HEK293 (cell line): ENCODE measurements at regions of chr20 and their contacts with region 1.

Region 1: GRCh38 chr20:37384683-37385174 is 38.8 kb downstream of the SRC start:
- H3K4me3 ChIP-seq: no peak overlapping the region
- H3K27ac ChIP-seq: no peak overlapping the region
- H3K4me1 ChIP-seq: no peaks in the 10 kb centered on the region
- CTCF ChIP-seq: peak; percentile 90

Region 2: DNA sequence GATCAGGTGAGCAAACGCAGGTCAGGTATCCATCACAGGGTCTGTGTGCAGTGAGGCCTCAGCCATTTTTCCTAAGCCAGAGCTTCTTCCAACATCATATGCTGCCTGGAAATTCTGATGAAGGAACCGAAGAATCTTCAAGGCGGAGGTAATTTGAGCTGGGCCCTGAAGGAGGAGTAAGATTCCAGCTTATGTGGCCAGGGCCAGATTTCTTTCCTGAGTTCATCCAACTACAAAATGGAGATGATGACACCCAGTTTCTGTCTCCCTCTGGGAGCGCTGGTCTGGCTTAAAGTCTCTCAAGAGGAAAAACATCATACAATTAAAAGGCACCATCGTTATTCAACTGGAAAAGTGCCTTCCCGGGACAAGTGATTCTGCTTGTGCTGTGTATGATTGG is 102.2 kb before region 1 on chr20:
- CTCF ChIA-PET with region 1: interaction called, 11 read pairs
- POLR2A ChIA-PET with region 1: no interaction called
- H3K4me3 ChIP-seq: no peak overlapping the region
- H3K27ac ChIP-seq: no peak overlapping the region
- H3K4me1 ChIP-seq: no peaks in the 10 kb centered on the region
- CTCF ChIP-seq: peak; percentile 30; the same call in 1 of the 2 replicates

Region 3: DNA sequence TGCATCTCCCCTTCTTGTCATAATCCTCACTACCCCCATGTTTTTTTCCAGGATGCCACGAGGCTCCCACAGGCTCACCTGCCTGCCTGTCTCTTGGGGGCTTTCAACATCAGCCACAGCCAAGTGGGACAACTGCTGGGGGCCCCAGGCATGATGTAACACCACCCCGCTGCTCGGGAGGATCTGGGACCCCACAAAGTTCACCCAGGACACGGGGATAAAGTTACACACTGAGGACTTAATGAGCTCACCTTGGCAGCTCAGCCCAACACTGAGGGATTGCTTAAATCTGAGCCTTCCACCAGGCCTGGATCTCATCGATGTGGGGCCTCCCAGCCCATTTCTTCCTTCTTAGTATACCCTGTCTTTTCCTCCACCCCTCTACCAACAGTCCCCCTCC is 79.9 kb after region 1 on chr20:
- CTCF ChIA-PET with region 1: no interaction called
- POLR2A ChIA-PET with region 1: no interaction called
- H3K4me3 ChIP-seq: no peak overlapping the region
- H3K27ac ChIP-seq: no peak overlapping the region
- H3K4me1 ChIP-seq: no peaks in the 10 kb centered on the region
- CTCF ChIP-seq: no peak